Right ventricle myocardium inferior (tissue), 1 donor: ENCODE measurements at regions of chr9 and their contacts with region 1.

Region 1: GRCh38 chr9:37966412-37967271 is 62.7 kb upstream of the SLC25A51 start:
- DNase-seq: no peak
- ATAC-seq: no peak

Region 2: DNA sequence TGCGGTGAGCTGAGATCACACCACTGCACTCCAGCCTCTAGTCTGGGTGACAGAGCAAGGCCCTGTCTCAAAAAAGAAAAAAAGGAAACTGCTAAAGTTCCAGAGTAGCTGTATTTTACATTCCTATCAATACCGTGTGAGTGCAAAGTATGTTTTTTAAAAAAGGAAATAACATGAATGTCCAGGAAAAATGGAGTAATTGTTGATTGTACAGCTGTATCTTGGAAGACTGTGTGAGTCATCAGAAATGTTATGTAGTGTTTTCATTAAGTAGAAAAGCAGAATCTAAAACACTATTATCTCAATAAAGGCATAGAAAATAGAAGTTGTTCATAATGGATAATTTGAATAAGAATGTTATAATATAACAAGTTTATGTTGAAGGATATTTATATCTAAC is 792.4 kb before region 1 on chr9:
- intact Hi-C with region 1: no loop called
- DNase-seq: no peak
- ATAC-seq: no peak

Region 3: GRCh38 chr9:37929441-37929895 is 37.2 kb before region 1 on chr9:
- intact Hi-C with region 1: loop called (anchors 5 kb)
- DNase-seq: peak; percentile 41
- ATAC-seq: no peak